Endothelial cell of umbilical vein (primary cell): ENCODE measurements at regions of chr4 and their contacts with region 1.

Region 1: GRCh38 chr4:108141213-108141950 is 27.4 kb downstream of the LEF1 start:
- DNase-seq: no peak
- H3K4me3 ChIP-seq: no peak overlapping the region
- H3K27ac ChIP-seq: no peak overlapping the region
- H3K4me1 ChIP-seq: no peaks in the 10 kb centered on the region
- H3K27me3 ChIP-seq: peaks cover 9 to 16% of the 10 kb centered on the region in 2 experiments
- CTCF ChIP-seq: no peak
- POLR2A ChIP-seq: no peak

Region 2: DNA sequence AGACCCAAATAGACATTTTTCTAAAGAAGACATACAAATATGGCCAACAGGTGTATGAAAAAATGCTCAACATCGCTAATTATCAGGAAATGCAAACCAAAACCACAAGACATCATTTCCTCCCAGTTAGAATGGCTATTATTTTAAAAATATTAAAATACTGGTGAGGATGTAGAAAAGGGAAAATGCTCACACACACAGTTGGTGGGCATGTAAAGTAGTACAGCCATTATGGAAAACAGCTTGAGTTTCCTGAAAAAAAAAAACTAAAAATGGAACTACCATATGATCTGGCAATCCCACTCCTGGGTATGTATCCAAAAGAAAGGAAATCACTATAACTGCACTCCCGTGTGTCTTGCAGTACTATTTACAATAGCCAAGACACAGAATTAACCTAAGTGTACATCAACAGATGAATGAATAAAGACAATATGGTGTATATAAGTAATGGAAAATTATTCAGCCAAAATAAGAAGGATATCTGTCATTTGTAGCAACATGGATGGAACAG is 976.4 kb before region 1 on chr4:
- CTCF ChIA-PET with region 1: no interaction called
- POLR2A ChIA-PET with region 1: interaction called, 10 read pairs
- dilution Hi-C with region 1: no loop called
- intact Hi-C with region 1: no loop called
- DNase-seq: no peak
- H3K4me3 ChIP-seq: no peak overlapping the region
- H3K27ac ChIP-seq: no peak overlapping the region
- H3K4me1 ChIP-seq: no peaks in the 10 kb centered on the region
- H3K27me3 ChIP-seq: no peaks in the 10 kb centered on the region
- CTCF ChIP-seq: no peak
- POLR2A ChIP-seq: no peak

Region 3: GRCh38 chr4:108280072-108280471 is 138.7 kb after region 1 on chr4:
- CTCF ChIA-PET with region 1: no interaction called
- POLR2A ChIA-PET with region 1: no interaction called
- dilution Hi-C with region 1: no loop called
- intact Hi-C with region 1: no loop called
- DNase-seq: no peak
- H3K4me3 ChIP-seq: no peak overlapping the region
- H3K27ac ChIP-seq: no peak overlapping the region
- H3K4me1 ChIP-seq: no peaks in the 10 kb centered on the region
- H3K27me3 ChIP-seq: no peaks in the 10 kb centered on the region
- CTCF ChIP-seq: no peak
- POLR2A ChIP-seq: no peak